AG04449 (cell line): ENCODE measurements at regions of chr16 and their contacts with region 1.

Region 1: DNA sequence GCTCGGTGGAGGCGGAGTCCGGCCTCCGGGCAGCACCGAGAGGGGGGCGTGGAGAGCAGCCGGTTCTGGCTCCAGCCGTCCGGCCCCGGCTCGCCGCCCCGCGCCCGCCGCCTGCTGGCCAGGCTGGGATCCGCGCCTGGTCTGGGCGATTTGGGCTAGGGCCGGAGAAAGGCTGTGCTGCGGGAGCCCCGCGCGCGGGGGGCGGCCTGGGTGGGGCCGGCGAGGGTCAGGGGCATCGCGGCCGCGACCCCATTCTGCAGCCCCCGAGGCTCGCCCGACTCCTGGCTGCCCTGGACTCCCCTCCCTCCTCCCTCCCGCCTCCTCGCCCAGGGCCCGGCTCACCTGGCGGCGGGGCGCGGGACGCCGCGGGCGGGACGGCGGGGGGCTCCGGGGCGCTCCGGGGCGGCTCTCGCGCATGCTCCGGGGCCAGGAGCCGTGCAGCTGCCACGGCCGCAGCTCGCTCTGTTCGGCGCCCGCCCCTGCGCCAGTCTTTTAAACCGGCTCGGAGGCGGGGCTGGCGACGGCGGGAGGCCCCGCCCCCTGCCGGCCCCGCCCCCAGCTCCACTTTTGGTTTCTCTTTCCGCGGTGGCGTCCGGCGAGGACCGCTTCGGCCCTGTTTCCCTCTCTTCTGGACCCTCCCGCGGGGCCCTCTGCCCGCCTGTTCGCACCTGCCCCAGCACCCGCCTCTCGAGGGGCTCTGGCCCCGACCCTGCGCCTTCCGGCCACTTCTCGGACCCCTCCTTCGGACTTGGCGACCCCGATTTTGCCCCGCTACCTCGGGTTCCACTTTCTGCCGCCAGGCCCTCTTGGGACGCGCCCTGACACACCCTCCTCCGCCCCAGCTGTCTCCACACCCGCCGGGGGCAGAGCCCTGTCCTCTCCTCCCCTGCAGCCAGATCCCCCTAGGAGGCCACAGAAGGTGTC is at the start of gene SOCS1:
- DNase-seq: no peak
- H3K4me3 ChIP-seq: peak within 1 kb of the TSS; percentile 74
- CTCF ChIP-seq: peak; percentile 74

Region 2: DNA sequence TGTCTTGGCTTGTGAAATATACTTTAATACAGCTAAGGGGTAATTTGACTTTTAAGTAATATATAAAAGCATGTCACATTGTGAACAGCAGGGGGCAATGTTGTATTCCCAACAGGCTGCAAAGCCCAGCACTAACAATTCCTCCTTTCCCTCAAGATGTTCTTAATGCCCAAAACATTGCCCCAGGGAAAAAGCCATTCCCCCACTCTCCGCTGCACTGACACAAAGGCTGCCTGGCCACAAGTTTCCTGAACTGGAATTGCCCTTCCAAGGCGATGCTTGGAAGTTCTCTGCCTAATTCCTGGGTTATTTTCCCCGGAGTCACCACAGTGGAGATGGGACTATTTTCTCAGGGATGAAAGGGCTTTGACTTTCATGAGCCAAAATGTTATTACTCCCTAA is 284.4 kb before region 1 on chr16:
- CTCF ChIA-PET with region 1: interaction called, 492 read pairs
- POLR2A ChIA-PET with region 1: interaction called, 21 read pairs
- DNase-seq: peak; percentile 75
- H3K4me3 ChIP-seq: no peak overlapping the region
- CTCF ChIP-seq: peak; percentile 59

Region 3: GRCh38 chr16:11032922-11033291 is 223.1 kb before region 1 on chr16:
- CTCF ChIA-PET with region 1: interaction called, 12 read pairs
- POLR2A ChIA-PET with region 1: interaction called, 12 read pairs
- DNase-seq: no peak
- H3K4me3 ChIP-seq: no peak overlapping the region
- CTCF ChIP-seq: no peak

Region 4: DNA sequence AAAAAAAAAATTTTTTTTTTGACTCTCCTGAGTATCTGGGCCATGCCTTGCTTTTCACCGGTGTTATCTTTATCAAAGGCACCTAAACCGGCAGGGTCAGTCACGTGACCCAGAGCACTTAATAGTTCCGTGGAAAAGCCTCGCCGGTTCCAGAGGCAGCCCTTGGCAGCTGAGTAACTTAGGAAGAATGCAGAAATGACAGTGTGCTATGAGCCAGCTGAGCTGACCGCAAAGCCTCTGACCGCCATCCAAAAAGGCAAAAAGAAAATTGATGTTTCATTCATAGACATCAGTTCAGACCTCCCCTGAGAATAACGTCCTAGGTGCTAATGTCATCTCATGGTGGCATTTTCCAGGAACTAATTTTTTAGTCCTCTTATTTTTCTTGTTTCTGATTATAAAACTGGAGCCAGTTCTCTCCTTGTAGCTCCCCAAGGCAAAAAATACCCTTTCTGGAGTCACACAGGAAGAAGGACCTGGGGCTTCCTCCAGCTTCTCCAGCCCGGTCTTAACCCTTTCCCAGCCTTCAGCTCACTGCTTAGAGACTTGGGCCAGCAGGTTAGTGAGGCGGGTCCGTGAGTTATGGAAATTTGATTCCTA is 122.6 kb before region 1 on chr16:
- CTCF ChIA-PET with region 1: interaction called, 8 read pairs
- POLR2A ChIA-PET with region 1: interaction called, 13 read pairs
- DNase-seq: peak; percentile 84
- H3K4me3 ChIP-seq: no peak overlapping the region
- CTCF ChIP-seq: no peak

Region 5: GRCh38 chr16:11161974-11162373 is 94.0 kb before region 1 on chr16:
- CTCF ChIA-PET with region 1: no interaction called
- POLR2A ChIA-PET with region 1: no interaction called
- DNase-seq: no peak
- H3K4me3 ChIP-seq: no peak overlapping the region
- CTCF ChIP-seq: no peak

Region 6: GRCh38 chr16:11328172-11329070 is 72.4 kb after region 1 on chr16:
- CTCF ChIA-PET with region 1: interaction called, 5 read pairs
- POLR2A ChIA-PET with region 1: interaction called, 10 read pairs
- DNase-seq: peak; percentile 65
- H3K4me3 ChIP-seq: peak overlapping the region; percentile 40
- CTCF ChIP-seq: no peak

Region 7: GRCh38 chr16:11386791-11387546 is 131.0 kb after region 1 on chr16:
- CTCF ChIA-PET with region 1: interaction called, 15 read pairs
- POLR2A ChIA-PET with region 1: interaction called, 3 read pairs
- DNase-seq: no peak
- H3K4me3 ChIP-seq: no peak overlapping the region
- CTCF ChIP-seq: peak; percentile 75

Region 8: GRCh38 chr16:11506741-11507305 is 250.8 kb after region 1 on chr16:
- CTCF ChIA-PET with region 1: no interaction called
- POLR2A ChIA-PET with region 1: no interaction called
- DNase-seq: no peak
- H3K4me3 ChIP-seq: no peak overlapping the region
- CTCF ChIP-seq: no peak

Region 9: GRCh38 chr16:12639044-12639443 is 1383.0 kb after region 1 on chr16:
- CTCF ChIA-PET with region 1: no interaction called
- POLR2A ChIA-PET with region 1: no interaction called
- DNase-seq: peak; percentile 23
- H3K4me3 ChIP-seq: no peak overlapping the region
- CTCF ChIP-seq: no peak